AG04449 (cell line): ENCODE measurements at regions of chr6 and their contacts with region 1.

Region 1: GRCh38 chr6:43496370-43497128 is 13.6 kb downstream of the LRRC73 start:
- DNase-seq: no peak
- H3K4me3 ChIP-seq: no peak overlapping the region
- CTCF ChIP-seq: peak; percentile 67

Region 2: GRCh38 chr6:43477235-43478007 is 19.1 kb before region 1 on chr6 and contains the start of gene TJAP1:
- CTCF ChIA-PET with region 1: interaction called, 21 read pairs
- POLR2A ChIA-PET with region 1: interaction called, 4 read pairs
- DNase-seq: no peak
- H3K4me3 ChIP-seq: peak within 1 kb of the TSS; percentile 74
- CTCF ChIP-seq: no peak

Region 3: GRCh38 chr6:43593938-43594337 is 97.4 kb after region 1 on chr6:
- CTCF ChIA-PET with region 1: no interaction called
- POLR2A ChIA-PET with region 1: no interaction called
- DNase-seq: no peak
- H3K4me3 ChIP-seq: no peak overlapping the region
- CTCF ChIP-seq: no peak